ENCODE measurements at regions of chr5 and their contacts with region 1.

Region 1: GRCh38 chr5:179907570-179908324 is at the start of gene TBC1D9B:
- DNase-seq: peak; percentile 71 to 87 (median 75)
- ATAC-seq: peak; percentile 67 to 93 (median 90)
- H3K4me3 ChIP-seq: peak within 1 kb of the TSS; percentile 24 to 82 (median 66)
- H3K27ac ChIP-seq: peak within 1 kb of the TSS; percentile 40 to 86 (median 73)
- H3K4me1 ChIP-seq: peaks cover 0 to 30% (median 15%) of the 10 kb centered on the region in 12 donors
- H3K27me3 ChIP-seq: no peaks in the 10 kb centered on the region
- CTCF ChIP-seq: peak; percentile 19 to 64 (median 44)
- POLR2A ChIP-seq: peak in 1 of 2 donors; percentile 26
- total RNA-seq, gene TBC1D9B: 29.3 to 68.9 (median 43.1) TPM

Region 2: DNA sequence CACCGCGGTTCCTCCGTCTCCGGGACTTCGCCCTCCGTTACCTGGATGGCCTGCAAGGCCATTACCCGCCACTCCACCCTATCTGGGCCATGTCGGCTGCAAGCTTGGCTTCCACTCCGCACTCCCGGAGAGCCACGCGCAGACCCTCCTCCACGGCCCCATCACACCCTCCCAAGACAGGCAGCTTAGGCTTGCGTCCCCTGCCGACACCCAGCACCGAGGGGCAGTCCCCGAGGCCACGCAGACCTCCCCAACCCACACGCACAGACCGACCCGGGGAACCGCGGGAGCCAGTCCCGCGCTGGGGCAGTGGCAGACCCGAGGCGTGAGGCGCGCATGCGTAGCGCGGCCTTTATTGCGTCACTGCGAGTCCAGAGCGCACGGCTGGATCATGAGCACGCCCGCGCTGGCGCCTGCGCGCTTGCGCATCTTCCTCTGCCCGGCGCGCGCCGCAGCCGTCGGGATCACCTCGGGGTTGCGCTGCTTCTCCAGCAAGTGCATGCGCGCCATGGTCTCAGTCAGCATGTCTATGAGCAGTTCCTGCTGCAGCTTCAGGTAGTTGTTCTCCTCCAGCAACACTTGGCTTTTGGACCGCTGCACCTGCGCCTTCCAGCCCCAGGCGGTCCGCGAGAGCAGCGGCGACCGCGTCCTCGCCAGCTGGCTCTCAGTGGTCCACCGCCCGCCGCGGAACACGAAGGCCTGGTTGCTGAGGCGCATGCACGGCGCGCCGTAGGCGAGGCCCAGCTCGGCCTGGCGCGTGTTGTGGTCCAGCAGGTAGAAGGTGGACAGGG is 229.3 kb before region 1 on chr5:
- intact Hi-C with region 1: loop called in 1 of 10 experiments (anchors 5 kb)
- DNase-seq: peak; percentile 96 to 99 (median 96)
- ATAC-seq: peak; percentile 96 to 99 (median 98)
- H3K4me3 ChIP-seq: peak overlapping the region; percentile 22 to 92 (median 84)
- H3K27ac ChIP-seq: peak overlapping the region; percentile 69 to 95 (median 85)
- H3K4me1 ChIP-seq: peaks cover 4 to 24% (median 18%) of the 10 kb centered on the region in 12 donors
- H3K27me3 ChIP-seq: no peaks in the 10 kb centered on the region
- CTCF ChIP-seq: peak in 1 of 12 donors; percentile 22
- POLR2A ChIP-seq: peak in 1 of 2 donors; percentile 87

Region 3: DNA sequence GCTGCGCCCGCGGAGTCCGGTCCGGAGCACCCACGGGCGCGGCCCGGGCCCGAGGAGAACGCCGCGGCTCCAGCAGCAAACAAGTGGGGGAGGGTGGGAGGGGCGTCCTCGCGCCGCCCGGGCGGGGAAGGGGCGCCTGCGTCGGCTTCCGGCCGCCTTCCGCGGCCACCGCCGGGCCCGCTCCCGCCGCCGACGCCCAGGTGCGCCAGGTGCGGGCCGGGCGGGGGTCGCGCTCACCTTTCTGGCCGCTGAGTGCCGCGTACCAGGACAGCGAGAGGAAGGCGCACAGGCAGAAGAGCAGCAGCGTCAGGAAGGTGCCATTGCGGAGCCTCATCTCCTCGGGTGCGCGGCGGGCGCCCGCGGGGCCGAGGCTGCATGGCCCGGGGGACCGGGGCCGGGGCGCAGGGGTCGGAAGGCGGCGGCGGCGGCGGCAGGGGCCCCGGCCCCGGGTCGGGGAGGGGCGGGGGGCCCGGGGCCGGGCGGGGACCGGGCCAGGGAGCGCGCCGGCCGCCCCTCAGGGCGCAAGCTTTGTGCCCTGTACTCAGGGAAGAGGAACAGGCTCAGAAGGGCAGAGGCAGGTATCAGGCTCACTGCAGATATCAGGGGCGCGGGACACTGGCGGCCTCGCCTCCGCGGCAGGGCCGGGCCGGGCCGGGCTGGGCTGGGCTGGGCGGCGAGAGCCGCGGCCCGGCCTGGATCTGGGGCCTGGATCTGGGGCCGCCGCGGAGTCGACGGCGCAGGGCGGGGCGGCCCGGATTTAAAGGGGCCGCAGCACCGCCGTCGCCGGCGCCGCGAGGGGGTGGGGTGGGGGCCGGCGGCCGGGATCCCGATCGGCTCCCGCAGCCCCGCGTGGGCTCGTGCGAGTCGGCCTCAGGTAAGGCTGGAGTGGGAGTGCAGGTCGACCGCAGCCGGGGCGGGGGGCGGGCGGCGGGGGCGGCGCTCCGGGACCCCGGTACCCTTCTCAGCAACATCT is 101.2 kb before region 1 on chr5 and contains the start of gene MGAT4B:
- intact Hi-C with region 1: loop called in 6 of 10 experiments (anchors 5 to 10 kb)
- DNase-seq: peak; percentile 78 to 89 (median 86)
- ATAC-seq: peak; percentile 69 to 90 (median 88)
- H3K4me3 ChIP-seq: peak within 1 kb of the TSS; percentile 73 to 100 (median 96)
- H3K27ac ChIP-seq: peak within 1 kb of the TSS; percentile 89 to 98 (median 96)
- H3K4me1 ChIP-seq: peaks cover 0 to 50% (median 39%) of the 10 kb centered on the region in 12 donors
- H3K27me3 ChIP-seq: no peaks in the 10 kb centered on the region
- CTCF ChIP-seq: no peak
- POLR2A ChIP-seq: peak in 1 of 2 donors; percentile 47
- total RNA-seq, gene MGAT4B: 84.2 to 209 (median 112) TPM

Region 4: DNA sequence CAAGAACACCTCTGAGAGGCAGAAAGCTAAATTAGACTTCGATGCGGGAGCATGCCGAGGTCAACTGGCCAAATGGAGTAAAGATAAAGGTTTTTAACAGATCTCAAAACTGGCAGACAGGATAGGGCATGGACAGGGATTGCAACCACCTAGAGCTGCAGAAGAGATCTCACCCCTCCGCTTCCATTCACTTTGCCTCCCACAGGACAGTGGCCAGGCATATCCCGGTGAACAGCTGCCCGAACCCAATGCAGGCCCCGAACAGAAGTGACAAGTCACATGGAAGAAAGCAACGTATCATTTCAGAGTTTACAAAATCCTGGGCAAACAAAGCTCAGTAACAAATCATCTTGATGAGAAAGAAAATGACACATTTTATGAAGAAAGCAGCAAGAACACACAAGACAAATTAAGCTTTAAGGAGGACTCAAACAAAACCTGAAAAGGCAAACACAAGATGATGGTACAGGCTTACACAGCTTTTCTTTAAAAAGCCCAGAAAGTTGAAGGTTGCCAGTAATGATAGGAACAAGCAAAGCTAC is 145.4 kb after region 1 on chr5:
- intact Hi-C with region 1: no loop called
- DNase-seq: no peak
- ATAC-seq: no peak
- H3K4me3 ChIP-seq: no peak overlapping the region
- H3K27ac ChIP-seq: no peak overlapping the region
- H3K4me1 ChIP-seq: peaks cover 0 to 37% (median 19%) of the 10 kb centered on the region in 12 donors
- H3K27me3 ChIP-seq: no peaks in the 10 kb centered on the region
- CTCF ChIP-seq: no peak
- POLR2A ChIP-seq: no peak

Region 5: GRCh38 chr5:180071531-180072255 is 163.9 kb after region 1 on chr5 and contains the start of gene RNF130:
- intact Hi-C with region 1: loop called in 2 of 10 experiments (anchors 5 to 10 kb)
- DNase-seq: peak; percentile 95 to 98 (median 96)
- ATAC-seq: peak; percentile 89 to 98 (median 96)
- H3K4me3 ChIP-seq: peak within 1 kb of the TSS; percentile 75 to 99 (median 90)
- H3K27ac ChIP-seq: peak within 1 kb of the TSS; percentile 91 to 100 (median 98)
- H3K4me1 ChIP-seq: peaks cover 0 to 38% (median 15%) of the 10 kb centered on the region in 12 donors
- H3K27me3 ChIP-seq: no peaks in the 10 kb centered on the region
- CTCF ChIP-seq: peak in 1 of 12 donors; percentile 19
- POLR2A ChIP-seq: peak in 1 of 2 donors; percentile 57
- total RNA-seq, gene RNF130: 34.4 to 76.2 (median 40.5) TPM

Region 6: DNA sequence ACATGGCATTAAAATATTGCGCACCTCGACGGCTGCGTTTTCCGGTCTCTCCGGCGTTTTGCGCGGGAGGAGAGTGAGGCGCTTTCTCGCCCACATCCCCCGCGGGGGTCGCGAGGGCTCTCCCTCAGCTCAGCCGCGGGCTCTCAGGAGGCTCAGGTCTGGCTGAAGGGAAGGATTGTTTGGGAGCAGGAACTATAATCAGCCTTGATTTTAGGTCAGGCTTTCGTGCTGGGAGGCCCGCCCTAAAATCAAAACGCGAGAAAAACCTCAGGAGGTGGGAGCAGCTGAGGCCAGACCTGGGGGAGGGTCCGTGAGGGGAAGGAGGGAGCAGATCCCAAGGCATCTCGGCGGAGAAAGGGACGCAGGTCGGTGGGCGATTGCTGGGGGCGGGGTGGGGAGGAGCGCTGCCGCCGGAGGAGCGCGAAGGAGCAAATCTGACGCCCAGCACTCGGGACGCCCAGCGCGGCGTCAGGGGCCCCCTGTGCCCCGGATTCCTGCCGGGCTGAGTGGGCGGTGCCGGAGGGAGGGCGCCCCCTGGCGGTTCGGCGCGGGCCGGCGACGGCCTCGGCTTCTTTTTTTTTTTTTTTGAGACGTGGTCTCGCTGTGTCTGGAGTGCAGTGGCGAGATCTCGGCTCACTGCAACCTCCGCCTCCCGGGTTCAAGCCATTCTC is 182.5 kb after region 1 on chr5:
- intact Hi-C with region 1: loop called in 4 of 10 experiments (anchors 5 to 10 kb)
- DNase-seq: peak; percentile 70 to 86 (median 77)
- ATAC-seq: peak; percentile 62 to 94 (median 88)
- H3K4me3 ChIP-seq: peak overlapping the region; percentile 6 to 79 (median 58)
- H3K27ac ChIP-seq: peak overlapping the region in 10 of 12 donors; percentile 12 to 85 (median 54)
- H3K4me1 ChIP-seq: peaks cover 0 to 24% (median 5%) of the 10 kb centered on the region in 12 donors
- H3K27me3 ChIP-seq: no peaks in the 10 kb centered on the region
- CTCF ChIP-seq: peak in 11 of 12 donors; percentile 83 to 98 (median 94)
- POLR2A ChIP-seq: no peak

Measured in heart left ventricle (tissue), 16 donors.